ENCODE measurements at regions of chr4 and their contacts with region 1.

Region 1: DNA sequence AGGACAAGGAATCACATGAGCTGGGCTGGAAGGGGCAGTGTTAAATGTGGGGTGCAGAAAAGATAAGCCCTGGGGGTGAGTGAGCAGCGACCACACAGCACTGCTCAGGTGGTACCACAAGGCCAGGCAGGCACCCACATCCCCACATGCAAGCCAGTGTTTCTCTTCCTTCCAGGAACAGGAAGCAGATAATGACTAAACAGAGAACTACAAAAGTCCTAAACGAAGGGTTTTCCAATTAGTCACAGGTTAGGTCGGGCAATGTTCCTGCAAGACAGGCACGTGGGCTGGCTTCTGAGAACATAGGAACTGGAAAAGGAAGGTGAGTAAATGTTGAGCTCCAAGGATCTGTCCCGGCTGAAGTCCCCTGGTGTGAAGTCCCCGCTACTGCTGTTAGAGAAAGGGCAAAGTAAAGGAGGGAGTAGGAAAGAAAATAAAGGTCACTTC is 19.5 kb downstream of the RELL1 start:
- DNase-seq: peak; percentile 95
- ATAC-seq: peak; percentile 77
- H3K4me3 ChIP-seq: no peak overlapping the region
- H3K27ac ChIP-seq: peak overlapping the region; percentile 35; the same call in 1 of the 2 replicates
- H3K4me1 ChIP-seq: peaks cover 25% of the 10 kb centered on the region
- H3K27me3 ChIP-seq: no peaks in the 10 kb centered on the region
- CTCF ChIP-seq: peak; percentile 26; the same call in 1 of the 2 replicates
- POLR2A ChIP-seq: no peak
- RAD21 ChIP-seq: peak; percentile 30

Region 2: DNA sequence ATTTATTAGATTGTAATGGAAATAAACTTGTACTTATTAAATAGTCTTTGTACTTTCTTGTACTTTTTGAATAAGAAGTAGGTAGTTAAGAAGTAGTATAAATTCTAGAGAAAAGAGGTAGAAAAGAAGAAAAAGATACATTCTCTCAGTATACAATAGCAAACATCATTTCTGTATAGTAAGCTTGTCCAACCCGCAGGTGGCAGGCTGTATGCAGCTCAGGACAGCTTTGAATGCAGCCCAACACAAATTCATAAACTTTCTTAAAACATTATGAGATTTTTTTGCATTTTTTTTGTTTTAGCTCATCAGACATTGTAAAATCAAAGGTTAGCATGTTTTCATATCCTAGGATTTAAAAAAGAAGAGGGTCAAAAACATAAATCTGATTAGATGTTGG is 943.7 kb before region 1 on chr4:
- CTCF ChIA-PET with region 1: no interaction called
- POLR2A ChIA-PET with region 1: no interaction called
- dilution Hi-C with region 1: no loop called
- in situ Hi-C with region 1: no loop called
- intact Hi-C with region 1: no loop called
- DNase-seq: no peak
- ATAC-seq: no peak
- H3K4me3 ChIP-seq: no peak overlapping the region
- H3K27ac ChIP-seq: no peak overlapping the region
- H3K4me1 ChIP-seq: no peaks in the 10 kb centered on the region
- H3K27me3 ChIP-seq: no peaks in the 10 kb centered on the region
- CTCF ChIP-seq: no peak
- POLR2A ChIP-seq: no peak
- RAD21 ChIP-seq: no peak

Region 3: DNA sequence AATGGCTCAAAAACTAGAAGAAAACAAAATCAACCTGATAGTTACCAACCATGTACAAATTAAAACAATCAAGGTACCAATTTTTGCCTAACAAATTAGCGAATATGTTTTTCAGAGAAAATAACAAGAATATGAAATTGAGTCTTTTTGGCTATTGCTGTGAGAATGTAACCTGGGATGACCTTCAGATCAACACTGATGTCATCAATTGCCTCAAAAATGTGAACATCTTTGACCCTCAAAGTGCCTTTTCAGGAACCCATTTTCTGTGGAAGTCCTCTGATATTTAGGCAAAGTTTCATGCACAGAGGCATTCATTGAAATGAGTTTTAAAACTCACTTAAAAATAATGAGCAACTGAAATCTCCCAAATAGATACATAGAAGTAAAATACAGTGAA is 13.4 kb after region 1 on chr4:
- CTCF ChIA-PET with region 1: no interaction called
- POLR2A ChIA-PET with region 1: no interaction called
- dilution Hi-C with region 1: no loop called
- in situ Hi-C with region 1: no loop called
- intact Hi-C with region 1: loop called (anchors 2 kb)
- DNase-seq: no peak
- ATAC-seq: no peak
- H3K4me3 ChIP-seq: no peak overlapping the region
- H3K27ac ChIP-seq: no peak overlapping the region
- H3K4me1 ChIP-seq: 0 out of 2 replicates have a peak, but pooled peaks cover 2% of the 10 kb centered on the region
- H3K27me3 ChIP-seq: no peaks in the 10 kb centered on the region
- CTCF ChIP-seq: no peak
- POLR2A ChIP-seq: no peak
- RAD21 ChIP-seq: no peak

Region 4: GRCh38 chr4:37994569-37994968 is 327.9 kb after region 1 on chr4:
- CTCF ChIA-PET with region 1: no interaction called
- POLR2A ChIA-PET with region 1: no interaction called
- dilution Hi-C with region 1: no loop called
- in situ Hi-C with region 1: no loop called
- intact Hi-C with region 1: no loop called
- DNase-seq: no peak
- ATAC-seq: no peak
- H3K4me3 ChIP-seq: no peak overlapping the region
- H3K27ac ChIP-seq: no peak overlapping the region
- H3K4me1 ChIP-seq: peaks cover 1% of the 10 kb centered on the region
- H3K27me3 ChIP-seq: no peaks in the 10 kb centered on the region
- CTCF ChIP-seq: no peak
- POLR2A ChIP-seq: no peak
- RAD21 ChIP-seq: no peak

Region 5: DNA sequence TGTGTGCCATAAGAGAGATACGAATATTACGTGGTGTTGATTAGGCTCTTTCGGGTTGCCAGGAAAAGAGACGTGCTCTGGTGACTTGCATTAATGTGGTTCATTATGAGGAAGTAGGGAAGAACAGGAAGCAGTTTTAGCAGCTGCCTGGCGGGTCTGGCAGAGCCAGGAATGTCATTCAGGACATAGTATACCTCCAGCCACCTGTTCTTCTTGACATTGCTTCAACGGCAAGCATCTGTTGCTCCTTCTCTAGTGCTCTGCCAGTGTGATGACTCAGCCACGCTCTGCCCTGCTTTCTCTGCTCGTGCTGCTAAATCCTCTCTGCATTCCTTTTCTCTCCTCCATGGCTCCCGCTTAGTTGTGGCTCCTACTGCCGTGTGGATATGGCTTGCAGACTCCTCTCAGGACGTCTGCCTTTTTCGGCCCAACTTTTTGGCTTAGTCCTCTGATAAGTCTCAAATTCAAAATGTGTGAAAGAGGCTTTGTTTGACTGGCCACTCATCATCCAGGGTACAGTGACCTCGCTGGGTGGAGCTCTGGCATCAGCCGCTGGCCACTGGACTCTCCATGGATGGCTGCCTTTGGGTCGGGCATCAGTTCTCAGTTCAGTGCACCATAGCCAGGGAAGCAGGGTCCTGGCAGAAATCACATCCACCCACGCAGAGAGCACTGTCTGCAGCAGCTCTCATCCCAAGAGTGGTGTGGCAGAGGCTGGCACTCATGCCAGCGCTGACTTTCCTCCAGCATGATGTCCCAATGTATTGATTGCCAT is 908.1 kb after region 1 on chr4:
- CTCF ChIA-PET with region 1: no interaction called
- POLR2A ChIA-PET with region 1: no interaction called
- dilution Hi-C with region 1: no loop called
- in situ Hi-C with region 1: no loop called
- intact Hi-C with region 1: no loop called
- DNase-seq: no peak
- ATAC-seq: no peak
- H3K4me3 ChIP-seq: no peak overlapping the region
- H3K27ac ChIP-seq: no peak overlapping the region
- H3K4me1 ChIP-seq: no peaks in the 10 kb centered on the region
- H3K27me3 ChIP-seq: no peaks in the 10 kb centered on the region
- CTCF ChIP-seq: no peak
- POLR2A ChIP-seq: no peak
- RAD21 ChIP-seq: no peak

Region 6: DNA sequence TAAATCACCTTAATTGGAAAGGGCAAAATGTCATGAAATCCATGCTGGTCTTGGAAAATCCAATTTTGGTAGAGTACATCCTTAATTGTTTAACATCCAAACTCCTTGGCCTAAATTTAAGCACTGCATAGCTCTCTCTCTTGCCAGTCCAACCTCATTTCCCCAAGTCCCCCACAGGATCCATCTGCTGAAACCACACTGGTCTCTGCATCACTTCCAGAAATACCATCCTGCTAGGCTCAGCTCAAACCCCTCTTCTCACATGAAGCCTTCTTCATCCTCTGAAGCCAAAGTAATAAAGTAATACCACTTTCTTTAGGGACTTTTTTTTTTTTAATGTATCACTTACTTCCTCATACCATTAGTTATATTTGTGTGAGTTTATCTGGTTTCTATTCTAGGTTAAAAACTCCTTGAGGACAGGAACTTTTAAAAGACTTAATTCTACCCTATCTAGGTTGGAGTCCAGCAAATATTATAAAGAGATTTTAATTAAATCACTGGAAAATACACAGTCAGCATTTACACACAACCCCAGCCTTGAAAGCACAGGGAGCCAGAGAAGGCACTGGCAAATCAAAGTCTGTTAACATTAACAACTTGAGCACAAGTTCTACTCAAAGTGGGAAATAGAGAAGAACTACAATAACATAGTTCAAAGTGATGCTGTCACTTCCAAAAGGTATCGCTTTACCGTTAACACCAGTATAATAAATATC is 980.6 kb after region 1 on chr4:
- CTCF ChIA-PET with region 1: no interaction called
- POLR2A ChIA-PET with region 1: no interaction called
- dilution Hi-C with region 1: no loop called
- in situ Hi-C with region 1: no loop called
- intact Hi-C with region 1: no loop called
- DNase-seq: no peak
- ATAC-seq: no peak
- H3K4me3 ChIP-seq: no peak overlapping the region
- H3K27ac ChIP-seq: no peak overlapping the region
- H3K4me1 ChIP-seq: no peaks in the 10 kb centered on the region
- H3K27me3 ChIP-seq: peaks cover 7% of the 10 kb centered on the region; the same call in 1 of the 2 replicates
- CTCF ChIP-seq: no peak
- POLR2A ChIP-seq: no peak
- RAD21 ChIP-seq: no peak

Measured in IMR-90 (cell line).